Ovary (tissue), 10 donors: ENCODE measurements at regions of chr2 and their contacts with region 1.

Region 1: GRCh38 chr2:96856776-96857673 is 791 bp downstream of the ANKRD39 start:
- DNase-seq: no peak
- H3K4me3 ChIP-seq: peak overlapping the region; percentile 96
- H3K27ac ChIP-seq: peak overlapping the region in 1 of 2 donors; percentile 62
- H3K4me1 ChIP-seq: peaks cover 14% of the 10 kb centered on the region
- H3K27me3 ChIP-seq: no peaks in the 10 kb centered on the region
- CTCF ChIP-seq: no peak
- EP300 ChIP-seq: no peak
- POLR2A ChIP-seq: no peak

Region 2: DNA sequence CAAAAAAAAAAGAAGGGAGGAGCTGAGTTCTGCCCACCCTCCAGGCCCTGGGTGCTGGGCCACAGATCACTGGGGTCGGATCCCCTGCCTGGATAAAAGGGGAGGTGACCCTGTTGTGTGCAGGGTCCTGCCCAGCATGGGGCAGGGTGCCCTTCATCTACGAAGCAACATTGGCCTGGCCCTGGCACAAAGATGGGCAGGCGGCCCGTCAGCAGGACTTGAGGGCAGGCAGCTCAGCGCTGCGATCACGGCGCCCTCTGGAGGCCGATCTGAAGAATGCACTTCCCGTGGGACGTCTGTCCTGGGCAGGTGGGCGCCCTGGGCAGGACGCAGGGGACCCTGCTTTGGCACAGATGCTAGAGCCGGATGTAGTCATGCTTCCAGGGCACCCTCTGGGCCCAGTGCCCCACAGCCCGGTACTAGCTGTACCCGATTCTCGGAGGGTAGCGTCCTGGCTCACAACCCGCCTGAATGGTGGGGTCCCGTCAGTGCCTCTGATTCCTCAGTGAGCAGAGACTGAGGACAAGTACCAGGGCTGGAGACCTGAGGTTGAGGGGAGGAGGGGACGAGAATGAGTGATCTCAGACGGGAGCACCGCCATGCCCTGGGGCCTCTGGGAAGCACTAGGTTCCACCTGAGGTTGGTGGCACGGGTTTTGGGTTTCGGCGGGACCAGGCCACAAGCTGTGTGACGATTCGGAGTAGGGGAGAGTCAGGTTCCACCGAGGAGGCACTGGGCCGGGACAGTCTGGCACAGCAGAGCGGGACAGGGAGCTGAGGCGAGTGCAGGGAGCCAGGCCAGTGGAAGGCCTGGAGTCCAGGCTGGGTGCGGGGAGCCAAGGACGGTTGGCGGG is 302.5 kb before region 1 on chr2:
- intact Hi-C with region 1: no loop called
- DNase-seq: peak; percentile 51 to 78 (median 70)
- H3K4me3 ChIP-seq: no peak overlapping the region
- H3K27ac ChIP-seq: no peak overlapping the region
- H3K4me1 ChIP-seq: peaks cover 4% of the 10 kb centered on the region
- H3K27me3 ChIP-seq: no peaks in the 10 kb centered on the region
- CTCF ChIP-seq: peak; percentile 82 to 90 (median 85)
- EP300 ChIP-seq: no peak
- POLR2A ChIP-seq: no peak

Region 3: GRCh38 chr2:96933305-96934181 is 76.5 kb after region 1 on chr2:
- intact Hi-C with region 1: no loop called
- DNase-seq: no peak
- H3K4me3 ChIP-seq: no peak overlapping the region
- H3K27ac ChIP-seq: no peak overlapping the region
- H3K4me1 ChIP-seq: no peaks in the 10 kb centered on the region
- H3K27me3 ChIP-seq: no peaks in the 10 kb centered on the region
- CTCF ChIP-seq: no peak
- EP300 ChIP-seq: no peak
- POLR2A ChIP-seq: no peak

Region 4: GRCh38 chr2:96960153-96960961 is 103.3 kb after region 1 on chr2:
- intact Hi-C with region 1: loop called in 1 of 4 experiments (anchors 2 kb)
- DNase-seq: peak; percentile 92 to 98 (median 94)
- H3K4me3 ChIP-seq: no peak overlapping the region
- H3K27ac ChIP-seq: no peak overlapping the region
- H3K4me1 ChIP-seq: no peaks in the 10 kb centered on the region
- H3K27me3 ChIP-seq: no peaks in the 10 kb centered on the region
- CTCF ChIP-seq: peak; percentile 92 to 96 (median 94)
- EP300 ChIP-seq: no peak
- POLR2A ChIP-seq: peak; percentile 33